Caco-2 (cell line): ENCODE measurements at regions of chr5 and their contacts with region 1.

Region 1: DNA sequence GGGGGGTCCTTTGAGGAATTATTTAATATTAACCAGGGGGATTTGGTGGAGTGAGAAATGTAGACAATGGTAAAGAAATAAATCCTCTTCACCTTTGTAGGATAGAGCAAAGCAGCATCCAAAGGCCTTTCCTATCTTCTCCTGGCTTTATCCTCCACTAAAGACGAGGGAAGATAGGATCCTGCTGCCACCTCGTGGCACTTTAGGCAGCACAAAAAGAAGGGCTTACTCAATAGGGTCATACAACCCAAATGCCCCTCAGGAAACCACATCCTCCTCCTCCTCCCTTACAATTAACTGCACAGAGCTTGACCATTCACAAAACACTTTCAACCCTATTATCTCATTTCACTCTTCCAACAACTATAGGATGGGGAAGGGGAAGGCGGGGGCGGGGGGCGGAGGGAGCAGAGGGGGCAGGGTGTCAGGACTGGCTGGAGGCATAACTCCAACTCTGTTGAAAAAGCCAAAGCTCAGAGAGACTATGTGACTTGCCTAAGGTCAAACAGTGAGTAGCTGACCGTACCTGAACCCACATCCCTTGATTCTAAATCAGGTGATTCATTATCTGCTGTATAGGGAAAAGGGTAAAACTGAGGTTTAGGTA is 45.4 kb upstream of the MYOT start:
- DNase-seq: peak; percentile 59 to 66
- H3K4me3 ChIP-seq: no peak overlapping the region
- H3K4me3 Mint-ChIP-seq: no peak overlapping the region
- H3K27ac Mint-ChIP-seq: no peak overlapping the region
- H3K4me1 ChIP-seq: no peaks in the 10 kb centered on the region
- H3K4me1 Mint-ChIP-seq: peaks cover 12% of the 10 kb centered on the region
- H3K27me3 ChIP-seq: no peaks in the 10 kb centered on the region
- H3K27me3 Mint-ChIP-seq: no peaks in the 10 kb centered on the region
- CTCF ChIP-seq: peak; percentile 58 to 84

Region 2: GRCh38 chr5:137594717-137595116 is 227.5 kb before region 1 on chr5:
- CTCF ChIA-PET with region 1: no interaction called
- POLR2A ChIA-PET with region 1: no interaction called
- intact Hi-C with region 1: no loop called
- DNase-seq: no peak
- H3K4me3 ChIP-seq: no peak overlapping the region
- H3K4me3 Mint-ChIP-seq: no peak overlapping the region
- H3K27ac Mint-ChIP-seq: no peak overlapping the region
- H3K4me1 ChIP-seq: no peaks in the 10 kb centered on the region
- H3K4me1 Mint-ChIP-seq: no peaks in the 10 kb centered on the region
- H3K27me3 ChIP-seq: no peaks in the 10 kb centered on the region; the same call in 1 of the 2 replicates
- H3K27me3 Mint-ChIP-seq: peaks cover 30% of the 10 kb centered on the region
- CTCF ChIP-seq: no peak

Region 3: DNA sequence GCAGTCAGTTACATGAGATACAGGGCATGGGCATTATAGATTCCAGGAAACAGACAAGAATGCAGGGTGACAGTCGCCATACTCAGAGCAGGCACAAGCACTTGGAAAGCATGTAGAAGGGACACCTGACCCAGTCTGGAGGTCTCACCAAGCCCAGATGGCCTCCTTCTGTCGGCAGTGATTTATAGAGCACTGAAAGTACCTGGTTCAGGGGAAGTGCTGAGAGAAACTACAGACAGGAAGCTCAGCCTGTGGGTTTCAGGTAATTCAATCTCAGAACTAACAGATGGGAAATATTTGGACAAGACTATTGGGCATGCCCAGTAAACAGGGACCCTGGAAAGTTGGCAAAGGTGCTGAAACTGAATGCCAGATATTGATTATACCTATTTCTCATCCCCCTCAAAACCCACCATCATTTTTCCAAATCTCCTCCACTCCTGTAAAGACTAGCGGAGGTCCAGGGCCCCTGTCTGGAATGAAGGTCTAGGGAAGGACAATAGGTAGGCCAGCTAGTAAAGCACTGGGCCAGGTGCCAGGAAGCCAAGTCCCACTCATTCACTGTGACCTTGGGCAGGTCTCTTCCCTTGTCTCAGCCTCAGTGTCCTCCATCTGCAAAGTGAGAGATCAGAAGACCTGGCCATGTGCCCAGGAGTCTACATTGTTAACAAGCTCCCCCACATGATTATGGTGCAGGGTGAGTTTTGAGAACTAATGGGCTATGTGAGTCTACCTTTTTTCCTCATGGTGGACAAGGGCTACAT is 113.3 kb before region 1 on chr5:
- CTCF ChIA-PET with region 1: no interaction called
- POLR2A ChIA-PET with region 1: no interaction called
- intact Hi-C with region 1: no loop called
- DNase-seq: no peak
- H3K4me3 ChIP-seq: no peak overlapping the region
- H3K4me3 Mint-ChIP-seq: no peak overlapping the region
- H3K27ac Mint-ChIP-seq: no peak overlapping the region
- H3K4me1 ChIP-seq: no peaks in the 10 kb centered on the region
- H3K4me1 Mint-ChIP-seq: no peaks in the 10 kb centered on the region
- H3K27me3 ChIP-seq: no peaks in the 10 kb centered on the region
- H3K27me3 Mint-ChIP-seq: no peaks in the 10 kb centered on the region
- CTCF ChIP-seq: no peak

Region 4: GRCh38 chr5:137754126-137754960 is 67.9 kb before region 1 on chr5 and contains the start of gene HNRNPA0:
- CTCF ChIA-PET with region 1: no interaction called
- POLR2A ChIA-PET with region 1: interaction called, 5 read pairs
- intact Hi-C with region 1: loop called (anchors 1 kb)
- DNase-seq: peak; percentile 97 to 98
- H3K4me3 ChIP-seq: peak within 1 kb of the TSS; percentile 91
- H3K4me3 Mint-ChIP-seq: peak within 1 kb of the TSS; percentile 97
- H3K27ac Mint-ChIP-seq: peak within 1 kb of the TSS; percentile 100
- H3K4me1 ChIP-seq: peaks cover 20% of the 10 kb centered on the region
- H3K4me1 Mint-ChIP-seq: no peaks in the 10 kb centered on the region
- H3K27me3 ChIP-seq: no peaks in the 10 kb centered on the region
- H3K27me3 Mint-ChIP-seq: no peaks in the 10 kb centered on the region
- CTCF ChIP-seq: no peak
- total RNA-seq, gene HNRNPA0: 41.9 and 42.5 TPM in 2 replicates

Region 5: DNA sequence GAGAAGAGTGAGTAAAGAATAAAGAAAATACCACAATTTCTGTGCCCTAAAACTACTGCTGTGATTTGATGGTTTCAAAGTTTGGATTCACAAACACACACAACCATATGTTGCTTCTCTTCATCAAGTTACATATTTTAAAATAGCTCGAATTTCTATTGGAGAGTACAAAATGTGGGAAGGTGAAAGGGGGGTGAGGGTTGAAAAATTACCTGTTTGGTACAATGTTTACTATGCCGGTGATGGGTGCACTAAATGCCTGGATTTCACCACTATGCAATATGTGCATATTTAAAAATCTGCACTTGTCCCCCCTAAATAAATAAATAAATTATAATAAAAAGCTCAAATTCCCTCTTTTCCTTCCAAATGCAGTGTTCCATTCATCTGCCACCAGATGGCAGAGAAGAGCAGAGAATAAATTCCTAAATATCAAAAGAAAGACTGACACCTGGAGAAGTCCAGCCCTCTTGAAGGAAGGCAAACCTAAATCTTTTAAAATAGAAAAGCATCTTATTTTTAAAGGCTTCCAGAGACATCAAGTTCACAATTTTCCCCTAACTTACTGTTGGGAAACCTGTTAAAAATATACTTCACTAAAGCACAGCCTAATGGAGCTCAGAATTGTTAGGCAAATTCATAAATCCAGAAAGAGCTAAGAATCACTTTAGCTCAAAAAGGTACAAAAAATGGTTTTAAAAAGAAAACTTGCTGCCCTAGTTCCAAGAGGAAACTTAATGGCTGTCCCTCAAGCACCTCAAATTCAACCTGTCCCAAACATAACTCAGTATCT is 43.3 kb before region 1 on chr5:
- CTCF ChIA-PET with region 1: interaction called, 12 read pairs
- POLR2A ChIA-PET with region 1: no interaction called
- intact Hi-C with region 1: loop called (anchors 1 kb)
- DNase-seq: peak in 1 of 2 experiments; percentile 34
- H3K4me3 ChIP-seq: no peak overlapping the region
- H3K4me3 Mint-ChIP-seq: no peak overlapping the region
- H3K27ac Mint-ChIP-seq: no peak overlapping the region
- H3K4me1 ChIP-seq: no peaks in the 10 kb centered on the region
- H3K4me1 Mint-ChIP-seq: no peaks in the 10 kb centered on the region
- H3K27me3 ChIP-seq: no peaks in the 10 kb centered on the region
- H3K27me3 Mint-ChIP-seq: peaks cover 13% of the 10 kb centered on the region
- CTCF ChIP-seq: peak; percentile 76 to 89